ENCODE measurements at regions of chr1 and their contacts with region 1.

Region 1: DNA sequence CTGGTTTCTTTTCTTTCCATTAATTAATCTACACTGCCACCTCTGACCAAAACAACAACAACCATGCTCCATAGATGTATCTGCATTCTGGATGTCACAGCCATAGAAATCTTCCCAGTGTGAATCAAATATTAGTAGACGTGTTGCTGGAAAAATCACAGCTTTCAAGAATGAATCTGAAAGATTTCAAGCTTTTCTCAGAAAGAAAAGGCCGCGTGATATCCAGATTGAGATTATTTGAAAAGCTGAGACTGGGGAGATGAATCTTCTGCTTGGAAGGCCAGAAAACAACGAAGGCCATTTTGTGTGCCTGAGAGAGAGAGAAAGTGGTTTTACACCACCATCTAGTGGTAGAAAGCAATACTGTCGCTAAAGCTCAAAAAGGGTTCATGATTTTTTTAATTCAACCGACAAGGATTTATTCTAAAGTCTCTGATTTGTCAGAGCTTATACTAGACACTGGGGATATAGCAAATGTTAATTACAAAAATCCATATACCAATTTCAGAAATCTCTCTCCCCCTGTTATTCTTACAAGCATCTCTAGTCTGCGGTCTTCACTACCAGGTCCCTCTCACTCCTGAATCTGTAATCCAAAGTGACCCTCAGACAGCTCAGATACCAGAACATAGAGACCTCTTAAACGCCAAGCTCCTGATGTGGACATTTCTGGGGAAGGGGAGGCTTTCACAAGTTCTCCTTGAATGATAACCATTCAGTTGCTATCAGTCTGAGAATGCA is 87.5 kb upstream of the SGIP1 start:
- DNase-seq: no peak
- H3K4me3 ChIP-seq: no peak overlapping the region
- H3K27ac ChIP-seq: peak overlapping the region; percentile 68
- H3K4me1 ChIP-seq: peaks cover 52% of the 10 kb centered on the region
- H3K27me3 ChIP-seq: no peaks in the 10 kb centered on the region
- CTCF ChIP-seq: peak; percentile 93

Region 2: DNA sequence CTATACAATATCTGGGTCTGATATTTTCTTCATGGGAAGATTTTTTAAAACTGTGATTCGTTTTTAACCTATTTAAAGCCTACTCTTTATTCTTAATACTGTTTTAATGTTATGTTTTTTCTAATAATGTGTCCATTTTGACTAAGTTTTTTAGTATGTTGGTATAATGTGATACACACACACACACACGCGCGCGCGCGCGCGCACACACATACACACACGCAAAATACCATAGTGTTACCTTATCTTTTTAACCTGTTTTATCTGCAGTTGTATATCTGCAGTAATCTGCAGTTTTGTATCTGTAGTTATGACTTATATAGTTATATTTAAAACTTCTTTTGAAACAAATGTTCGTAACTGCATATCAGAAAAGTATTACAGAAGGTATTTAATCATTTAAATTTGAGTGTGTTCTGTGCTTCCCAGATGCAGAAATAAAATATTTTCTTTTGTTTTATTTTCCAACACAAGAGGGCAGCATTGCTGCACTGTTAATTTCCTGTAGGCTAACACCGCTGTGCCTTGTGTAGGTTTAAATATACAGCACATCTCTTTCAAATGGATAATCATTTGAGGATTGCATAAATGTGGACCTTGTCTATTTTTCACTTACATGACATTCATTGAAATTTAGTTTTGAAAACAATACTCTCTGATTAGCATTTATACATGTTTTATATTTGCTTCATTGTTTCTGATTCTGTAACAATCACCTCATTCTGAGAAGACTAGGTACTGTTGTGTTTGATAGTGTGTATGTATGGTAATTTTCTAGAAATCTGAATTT is 487.7 kb before region 1 on chr1:
- intact Hi-C with region 1: loop called (anchors 5 kb)
- DNase-seq: no peak
- H3K4me3 ChIP-seq: no peak overlapping the region
- H3K27ac ChIP-seq: no peak overlapping the region
- H3K4me1 ChIP-seq: no peaks in the 10 kb centered on the region
- H3K27me3 ChIP-seq: no peaks in the 10 kb centered on the region
- CTCF ChIP-seq: peak; percentile 78

Region 3: GRCh38 chr1:66253330-66253921 is 193.0 kb before region 1 on chr1:
- intact Hi-C with region 1: loop called (anchors 2 kb)
- DNase-seq: no peak
- H3K4me3 ChIP-seq: no peak overlapping the region
- H3K27ac ChIP-seq: no peak overlapping the region
- H3K4me1 ChIP-seq: peaks cover 11% of the 10 kb centered on the region
- H3K27me3 ChIP-seq: no peaks in the 10 kb centered on the region
- CTCF ChIP-seq: peak; percentile 91